Left lung (tissue), 14 donors: ENCODE measurements at regions of chr3 and their contacts with region 1.

Region 1: GRCh38 chr3:45499529-45499928 is 95.0 kb upstream of the LIMD1 start:
- DNase-seq: no peak
- ATAC-seq: peak; percentile 65
- H3K4me3 ChIP-seq: no peak overlapping the region
- H3K27ac ChIP-seq: no peak overlapping the region
- H3K4me1 ChIP-seq: no peaks in the 10 kb centered on the region
- H3K27me3 ChIP-seq: no peaks in the 10 kb centered on the region
- CTCF ChIP-seq: peak in 1 of 2 donors; percentile 50

Region 2: DNA sequence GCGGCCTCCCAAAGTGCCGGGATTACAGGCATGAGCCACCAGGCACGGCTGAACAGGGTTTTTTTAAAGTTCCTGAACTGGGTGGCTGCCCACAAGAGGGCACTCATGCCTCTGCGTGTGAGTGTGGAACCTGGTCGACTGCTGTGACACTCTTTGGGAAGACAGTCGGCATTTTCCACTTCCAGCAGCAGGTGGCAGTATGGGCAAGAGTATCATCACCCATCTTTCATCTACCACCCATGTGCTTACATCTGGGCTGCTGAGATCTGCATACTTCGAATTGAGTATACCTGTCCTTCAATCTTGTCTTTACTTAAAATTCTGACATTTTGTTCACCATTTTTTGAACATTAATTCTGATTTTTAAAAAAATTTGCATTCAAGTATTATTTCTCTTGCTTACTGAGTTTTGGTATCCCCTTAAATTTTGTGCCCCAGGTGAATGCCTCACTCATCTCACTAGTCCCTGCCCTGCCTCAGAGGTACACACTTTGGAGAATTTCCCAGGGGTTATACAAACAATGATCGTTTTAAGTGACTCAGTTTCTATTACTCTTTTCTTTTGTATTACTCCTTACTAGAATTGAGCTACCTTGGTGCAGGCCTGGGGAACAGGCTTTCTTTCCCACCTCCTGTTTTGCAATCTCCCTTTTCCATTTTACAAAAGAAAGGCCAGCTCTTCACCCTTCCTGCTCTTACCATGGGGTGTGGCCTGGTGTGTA is 461.6 kb before region 1 on chr3:
- intact Hi-C with region 1: loop called in 1 of 2 experiments (anchors 5 kb)
- DNase-seq: peak; percentile 76 to 91 (median 90)
- ATAC-seq: peak; percentile 90
- H3K4me3 ChIP-seq: no peak overlapping the region
- H3K27ac ChIP-seq: no peak overlapping the region
- H3K4me1 ChIP-seq: peaks cover 25 to 63% of the 10 kb centered on the region in 2 donors
- H3K27me3 ChIP-seq: peaks cover 0 to 12% of the 10 kb centered on the region in 2 donors
- CTCF ChIP-seq: peak; percentile 75 to 95

Region 3: GRCh38 chr3:45224824-45225464 is 274.6 kb before region 1 on chr3:
- intact Hi-C with region 1: loop called in 1 of 2 experiments (anchors 10 kb)
- DNase-seq: peak; percentile 68 to 93 (median 82)
- ATAC-seq: peak; percentile 86
- H3K4me3 ChIP-seq: peak overlapping the region; percentile 29 to 47
- H3K27ac ChIP-seq: no peak overlapping the region
- H3K4me1 ChIP-seq: peaks cover 0 to 14% of the 10 kb centered on the region in 2 donors
- H3K27me3 ChIP-seq: peaks cover 18 to 92% of the 10 kb centered on the region in 2 donors
- CTCF ChIP-seq: peak; percentile 27 to 38

Region 4: GRCh38 chr3:45870099-45870498 is 370.6 kb after region 1 on chr3:
- intact Hi-C with region 1: no loop called
- DNase-seq: no peak
- ATAC-seq: no peak
- H3K4me3 ChIP-seq: no peak overlapping the region
- H3K27ac ChIP-seq: no peak overlapping the region
- H3K4me1 ChIP-seq: no peaks in the 10 kb centered on the region
- H3K27me3 ChIP-seq: no peaks in the 10 kb centered on the region
- CTCF ChIP-seq: no peak